Activated CD4-positive, alpha-beta T cell treated with anti-CD3 and anti-CD28 coated beads for 36 hours (primary cell): ENCODE measurements at regions of chr19 and their contacts with region 1.

Region 1: DNA sequence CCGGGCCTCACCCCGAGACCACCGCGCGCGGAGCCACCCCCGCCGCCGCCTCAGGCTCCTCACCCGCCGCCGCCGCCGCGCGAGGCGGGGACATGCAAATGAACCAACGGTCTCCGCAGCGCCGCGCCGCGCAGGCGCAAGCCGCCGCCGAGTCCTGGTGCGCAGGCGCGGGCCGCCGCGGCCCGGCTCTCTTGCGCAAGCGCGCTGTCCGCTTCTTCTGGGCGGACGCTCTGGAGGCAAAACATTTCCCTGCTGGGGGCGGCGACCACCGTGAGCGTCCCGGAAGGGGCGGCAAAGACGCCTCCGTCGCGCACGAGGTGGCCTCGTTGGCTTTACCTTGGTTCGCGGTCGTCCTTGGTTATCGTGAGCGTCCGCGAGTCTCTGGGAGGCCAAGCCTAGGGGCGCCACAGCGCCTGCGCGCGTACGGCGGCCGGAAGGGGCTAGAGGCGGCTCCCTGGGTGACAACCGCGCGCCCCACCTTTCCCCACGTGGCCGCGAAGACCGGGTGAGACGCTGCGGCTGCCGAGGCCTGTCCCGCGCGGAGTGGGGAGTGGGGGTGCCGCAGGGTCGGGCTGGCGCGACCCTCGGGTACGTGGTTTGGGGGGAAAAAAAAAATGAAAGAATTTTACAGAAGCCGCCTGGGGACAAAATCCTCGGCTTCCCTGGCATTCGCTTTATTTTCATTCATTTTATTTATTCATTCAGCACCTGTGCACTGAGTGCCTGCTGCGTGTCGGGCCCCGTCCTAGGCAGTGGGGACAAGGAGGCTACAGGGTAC is at the starts of genes ARMC6 and SUGP2:
- DNase-seq: peak; percentile 92
- ATAC-seq: peak; percentile 78
- H3K4me3 Mint-ChIP-seq: peak within 1 kb of the TSS; percentile 98
- H3K27ac Mint-ChIP-seq: peak within 1 kb of the TSS; percentile 96
- H3K4me1 Mint-ChIP-seq: peaks cover 31% of the 10 kb centered on the region
- H3K27me3 Mint-ChIP-seq: no peaks in the 10 kb centered on the region
- total RNA-seq, gene ARMC6: 33.0 to 40.8 TPM
- total RNA-seq, gene SUGP2: 89.8 to 104 TPM

Region 2: DNA sequence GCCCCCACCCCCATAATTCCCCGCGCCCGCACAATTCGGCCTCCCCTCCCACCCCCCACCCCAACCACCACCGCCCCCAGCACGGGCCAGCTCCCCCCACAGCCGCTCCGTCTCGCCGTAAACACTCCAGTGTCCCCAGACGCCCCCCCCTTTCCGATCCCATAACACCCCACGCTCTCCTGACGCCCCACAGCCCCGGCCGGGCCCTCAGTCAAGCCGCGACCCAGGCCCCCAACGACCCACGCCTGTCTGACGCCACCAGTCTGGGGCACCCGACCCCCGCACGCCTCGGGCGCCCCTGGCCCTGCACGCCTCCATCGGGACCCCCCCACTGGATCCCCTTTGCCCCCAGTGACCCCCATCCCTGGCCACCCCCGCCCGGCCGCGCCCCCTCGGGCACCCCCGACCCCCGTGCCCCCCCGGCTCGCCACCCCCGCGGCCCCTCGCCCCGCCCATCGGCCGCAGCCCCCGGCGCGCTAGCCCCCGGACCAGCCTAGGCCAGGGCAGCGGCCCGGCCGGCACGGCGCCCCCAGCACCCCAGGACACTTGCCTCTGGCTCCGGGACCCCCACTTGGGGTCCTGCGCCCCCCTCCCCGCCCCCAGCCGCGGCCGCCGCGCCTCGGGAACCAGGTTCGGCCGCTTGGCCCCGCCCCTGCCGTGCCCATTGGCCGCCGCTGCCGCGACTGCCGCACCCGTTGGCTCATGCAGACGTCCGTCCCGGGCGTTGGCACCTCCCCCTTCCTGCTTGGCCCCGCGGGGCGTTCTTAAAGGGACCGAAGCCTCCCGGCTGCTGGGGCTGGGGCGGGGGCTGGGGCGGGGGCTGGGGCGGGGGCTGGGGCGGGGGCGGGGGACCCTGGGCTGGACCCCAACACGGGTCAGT is 490.4 kb before region 1 on chr19 and contains the start of gene FKBP8:
- CTCF ChIA-PET with region 1: no interaction called
- POLR2A ChIA-PET with region 1: no interaction called
- intact Hi-C with region 1: loop called in 1 of 2 experiments (anchors 1 kb)
- DNase-seq: peak; percentile 98
- ATAC-seq: peak; percentile 92
- H3K4me3 Mint-ChIP-seq: peak within 1 kb of the TSS; percentile 92
- H3K27ac Mint-ChIP-seq: peak within 1 kb of the TSS; percentile 98
- H3K4me1 Mint-ChIP-seq: peaks cover 25% of the 10 kb centered on the region
- H3K27me3 Mint-ChIP-seq: no peaks in the 10 kb centered on the region
- total RNA-seq, gene FKBP8: 208 to 211 TPM

Region 3: GRCh38 chr19:18571564-18572300 is 461.9 kb before region 1 on chr19 and contains the start of gene UBA52:
- CTCF ChIA-PET with region 1: no interaction called
- POLR2A ChIA-PET with region 1: no interaction called
- intact Hi-C with region 1: loop called in 1 of 2 experiments (anchors 1 kb)
- DNase-seq: peak; percentile 100
- ATAC-seq: peak; percentile 94
- H3K4me3 Mint-ChIP-seq: peak within 1 kb of the TSS; percentile 89
- H3K27ac Mint-ChIP-seq: peak within 1 kb of the TSS; percentile 95
- H3K4me1 Mint-ChIP-seq: peaks cover 27% of the 10 kb centered on the region
- H3K27me3 Mint-ChIP-seq: no peaks in the 10 kb centered on the region
- total RNA-seq, gene UBA52: 1,703 to 2,296 TPM

Region 4: GRCh38 chr19:18940769-18941407 is 92.7 kb before region 1 on chr19 and contains the start of gene HOMER3:
- CTCF ChIA-PET with region 1: no interaction called
- POLR2A ChIA-PET with region 1: no interaction called
- intact Hi-C with region 1: no loop called
- DNase-seq: peak; percentile 87
- ATAC-seq: peak; percentile 91
- H3K4me3 Mint-ChIP-seq: peak within 1 kb of the TSS; percentile 48
- H3K27ac Mint-ChIP-seq: no peak within 1 kb of the TSS
- H3K4me1 Mint-ChIP-seq: peaks cover 6% of the 10 kb centered on the region
- H3K27me3 Mint-ChIP-seq: peaks cover 25% of the 10 kb centered on the region
- total RNA-seq, gene HOMER3: 0.46 to 0.62 TPM

Region 5: DNA sequence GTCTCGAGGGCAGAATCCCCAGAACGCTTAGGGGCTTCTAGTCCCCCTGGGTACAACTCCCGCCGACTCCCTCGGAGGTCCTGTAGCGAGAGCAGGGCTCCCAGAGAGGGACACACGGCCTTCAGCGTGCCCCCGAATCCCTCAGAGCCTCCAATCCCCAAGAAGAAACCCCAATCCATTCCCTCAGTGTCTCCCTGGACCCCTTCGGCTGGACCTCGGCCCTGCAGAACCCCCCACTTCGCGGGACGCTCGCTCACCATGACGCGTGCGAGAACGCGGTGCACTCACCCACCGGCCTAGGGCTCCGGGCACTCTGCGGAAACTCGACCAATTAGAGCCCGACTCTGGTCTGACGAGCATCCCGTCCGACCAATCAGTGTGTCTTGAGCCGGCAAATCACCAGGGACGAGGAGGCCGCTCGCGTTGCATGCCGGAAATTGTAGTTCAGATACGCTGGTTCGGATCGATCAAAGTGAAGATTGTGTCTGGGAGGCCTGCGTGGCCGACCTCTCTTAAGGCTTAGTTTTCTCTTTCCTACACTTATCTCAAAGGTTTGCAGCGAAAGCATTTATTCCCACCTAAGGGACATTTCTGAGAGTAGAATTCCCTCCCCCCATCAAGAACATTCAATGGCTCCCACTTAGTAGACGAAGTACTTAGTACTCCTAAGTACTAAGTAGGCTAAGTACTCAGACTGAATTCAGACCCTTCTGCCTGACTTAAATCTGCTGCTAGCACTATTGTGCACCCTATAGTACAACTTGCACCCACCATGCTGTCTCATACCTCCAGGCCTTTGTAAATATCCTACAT is 104.8 kb after region 1 on chr19 and contains the start of gene TMEM161A:
- CTCF ChIA-PET with region 1: no interaction called
- POLR2A ChIA-PET with region 1: no interaction called
- intact Hi-C with region 1: loop called in 1 of 2 experiments (anchors 1 kb)
- DNase-seq: peak; percentile 98
- ATAC-seq: peak; percentile 100
- H3K4me3 Mint-ChIP-seq: peak within 1 kb of the TSS; percentile 93
- H3K27ac Mint-ChIP-seq: peak within 1 kb of the TSS; percentile 95
- H3K4me1 Mint-ChIP-seq: peaks cover 30% of the 10 kb centered on the region
- H3K27me3 Mint-ChIP-seq: no peaks in the 10 kb centered on the region
- total RNA-seq, gene TMEM161A: 26.8 to 31.9 TPM

Region 6: DNA sequence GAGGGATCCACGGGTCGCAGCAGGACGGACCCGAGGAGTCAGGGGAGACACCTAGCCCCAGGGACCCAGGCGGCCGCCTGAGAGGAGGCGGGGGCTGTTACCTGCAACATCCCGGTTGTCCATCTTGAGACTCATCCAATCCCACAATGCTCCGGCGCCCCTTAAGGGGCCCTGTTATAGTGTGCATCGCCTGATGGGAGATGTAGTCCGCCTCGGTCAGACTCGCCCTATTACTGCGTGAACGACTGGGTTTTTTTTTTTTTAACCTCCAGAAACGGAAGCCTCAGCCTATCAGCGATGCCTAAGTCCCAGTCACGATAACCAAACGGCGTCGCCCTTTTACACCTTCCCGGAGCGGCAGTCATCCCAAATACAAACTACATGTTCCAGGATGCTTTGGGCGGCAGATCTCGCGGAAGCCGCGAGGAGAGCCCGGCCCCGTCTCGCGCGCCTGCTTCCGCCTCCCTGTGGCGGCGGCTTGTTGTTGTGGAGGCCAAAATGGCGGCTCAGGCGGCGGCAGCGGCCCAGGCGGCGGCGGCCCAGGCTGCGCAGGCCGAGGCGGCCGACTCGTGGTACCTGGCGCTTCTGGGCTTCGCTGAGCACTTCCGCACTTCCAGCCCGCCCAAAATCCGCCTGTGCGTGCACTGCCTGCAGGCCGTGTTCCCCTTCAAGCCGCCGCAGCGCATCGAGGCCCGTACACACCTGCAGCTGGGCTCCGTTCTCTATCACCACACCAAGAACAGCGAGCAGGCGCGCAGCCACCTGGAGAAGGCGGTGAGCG is 286.9 kb after region 1 on chr19 and contains the starts of genes MAU2 and SUGP1:
- CTCF ChIA-PET with region 1: no interaction called
- POLR2A ChIA-PET with region 1: no interaction called
- intact Hi-C with region 1: loop called in 1 of 2 experiments (anchors 1 kb)
- DNase-seq: peak; percentile 96
- ATAC-seq: peak; percentile 93
- H3K4me3 Mint-ChIP-seq: peak within 1 kb of the TSS; percentile 93
- H3K27ac Mint-ChIP-seq: peak within 1 kb of the TSS; percentile 100
- H3K4me1 Mint-ChIP-seq: peaks cover 39% of the 10 kb centered on the region
- H3K27me3 Mint-ChIP-seq: no peaks in the 10 kb centered on the region
- total RNA-seq, gene MAU2: 33.3 to 45.7 TPM
- total RNA-seq, gene SUGP1: 49.4 to 62.0 TPM